ENCODE measurements at regions of chr2 and their contacts with region 1.

Region 1: DNA sequence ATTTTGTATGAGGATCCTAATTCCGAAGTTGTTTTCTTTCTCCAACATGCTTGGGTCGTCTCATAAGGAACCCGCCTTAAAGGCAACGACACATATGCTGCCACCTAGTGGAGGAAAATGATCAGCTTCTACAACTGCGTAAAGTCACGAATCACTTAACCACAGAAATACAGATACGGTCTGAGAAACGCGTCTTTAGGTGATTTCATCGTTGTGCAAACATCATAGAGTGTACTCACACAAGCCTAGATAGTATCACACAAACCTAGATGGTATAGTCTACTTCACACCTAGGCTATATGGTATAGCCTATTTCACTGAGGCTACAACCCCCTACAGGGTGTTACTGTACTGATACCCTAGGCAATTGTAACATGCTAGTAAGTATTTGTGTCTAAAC is 13.1 kb downstream of the GNLY start:
- DNase-seq: peak; percentile 90
- ATAC-seq: peak; percentile 71
- H3K4me3 ChIP-seq: no peak overlapping the region
- H3K4me3 Mint-ChIP-seq: peak overlapping the region; percentile 40
- H3K27ac ChIP-seq: no peak overlapping the region
- H3K27ac Mint-ChIP-seq: peak overlapping the region; percentile 38
- H3K4me1 ChIP-seq: peaks cover 39 to 44% of the 10 kb centered on the region in 2 donors
- H3K4me1 Mint-ChIP-seq: peaks cover 39% of the 10 kb centered on the region
- H3K27me3 ChIP-seq: peaks cover 0 to 9% (median 0%) of the 10 kb centered on the region in 4 experiments
- H3K27me3 Mint-ChIP-seq: peaks cover 16% of the 10 kb centered on the region
- CTCF ChIP-seq: peak; percentile 94

Region 2: DNA sequence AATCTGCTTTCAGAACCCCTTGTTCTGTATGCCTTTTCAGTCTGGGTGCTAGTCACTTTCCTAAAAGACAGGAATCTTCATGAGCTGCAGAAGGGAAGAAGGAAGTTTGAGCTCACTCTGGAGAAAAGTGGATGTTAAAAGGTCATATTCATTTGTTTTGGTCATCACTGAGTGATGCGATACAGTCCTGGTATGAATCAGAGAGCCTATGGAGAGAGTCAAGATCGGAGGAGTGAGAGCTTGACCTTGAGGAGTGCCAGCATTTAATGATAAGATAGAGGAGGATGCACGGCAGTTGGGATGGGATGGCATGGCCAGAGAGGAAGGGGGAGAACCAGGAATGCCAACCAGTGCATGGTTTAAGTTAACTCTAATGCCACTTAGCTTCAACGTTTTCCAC is 71.7 kb before region 1 on chr2:
- CTCF ChIA-PET with region 1: interaction called, 134 read pairs
- POLR2A ChIA-PET with region 1: no interaction called
- intact Hi-C with region 1: no loop called
- DNase-seq: no peak
- ATAC-seq: no peak
- H3K4me3 ChIP-seq: no peak overlapping the region
- H3K4me3 Mint-ChIP-seq: no peak overlapping the region
- H3K27ac ChIP-seq: no peak overlapping the region
- H3K27ac Mint-ChIP-seq: no peak overlapping the region
- H3K4me1 ChIP-seq: no peaks in the 10 kb centered on the region
- H3K4me1 Mint-ChIP-seq: peaks cover 4% of the 10 kb centered on the region
- H3K27me3 ChIP-seq: no peaks in the 10 kb centered on the region
- H3K27me3 Mint-ChIP-seq: no peaks in the 10 kb centered on the region
- CTCF ChIP-seq: no peak

Region 3: GRCh38 chr2:85648619-85649018 is 58.7 kb before region 1 on chr2:
- CTCF ChIA-PET with region 1: interaction called, 13 read pairs
- POLR2A ChIA-PET with region 1: no interaction called
- intact Hi-C with region 1: no loop called
- DNase-seq: peak; percentile 52
- ATAC-seq: peak; percentile 35
- H3K4me3 ChIP-seq: no peak overlapping the region
- H3K4me3 Mint-ChIP-seq: peak overlapping the region; percentile 2
- H3K27ac ChIP-seq: peak overlapping the region in 1 of 2 donors; percentile 1
- H3K27ac Mint-ChIP-seq: no peak overlapping the region
- H3K4me1 ChIP-seq: peaks cover 18 to 26% of the 10 kb centered on the region in 2 donors
- H3K4me1 Mint-ChIP-seq: peaks cover 22% of the 10 kb centered on the region
- H3K27me3 ChIP-seq: no peaks in the 10 kb centered on the region
- H3K27me3 Mint-ChIP-seq: no peaks in the 10 kb centered on the region
- CTCF ChIP-seq: peak; percentile 69

Region 4: GRCh38 chr2:85694052-85695025 is 13.0 kb before region 1 on chr2 and contains the start of gene GNLY:
- CTCF ChIA-PET with region 1: interaction called, 17 read pairs
- POLR2A ChIA-PET with region 1: no interaction called
- intact Hi-C with region 1: no loop called
- DNase-seq: no peak
- ATAC-seq: no peak
- H3K4me3 ChIP-seq: no peak within 1 kb of the TSS
- H3K4me3 Mint-ChIP-seq: no peak within 1 kb of the TSS
- H3K27ac ChIP-seq: no peak within 1 kb of the TSS
- H3K27ac Mint-ChIP-seq: no peak within 1 kb of the TSS
- H3K4me1 ChIP-seq: no peaks in the 10 kb centered on the region
- H3K4me1 Mint-ChIP-seq: peaks cover 4% of the 10 kb centered on the region
- H3K27me3 ChIP-seq: no peaks in the 10 kb centered on the region
- H3K27me3 Mint-ChIP-seq: peaks cover 5% of the 10 kb centered on the region
- CTCF ChIP-seq: no peak
- total RNA-seq, gene GNLY: 4.2 and 4.3 TPM in 2 replicates

Region 5: DNA sequence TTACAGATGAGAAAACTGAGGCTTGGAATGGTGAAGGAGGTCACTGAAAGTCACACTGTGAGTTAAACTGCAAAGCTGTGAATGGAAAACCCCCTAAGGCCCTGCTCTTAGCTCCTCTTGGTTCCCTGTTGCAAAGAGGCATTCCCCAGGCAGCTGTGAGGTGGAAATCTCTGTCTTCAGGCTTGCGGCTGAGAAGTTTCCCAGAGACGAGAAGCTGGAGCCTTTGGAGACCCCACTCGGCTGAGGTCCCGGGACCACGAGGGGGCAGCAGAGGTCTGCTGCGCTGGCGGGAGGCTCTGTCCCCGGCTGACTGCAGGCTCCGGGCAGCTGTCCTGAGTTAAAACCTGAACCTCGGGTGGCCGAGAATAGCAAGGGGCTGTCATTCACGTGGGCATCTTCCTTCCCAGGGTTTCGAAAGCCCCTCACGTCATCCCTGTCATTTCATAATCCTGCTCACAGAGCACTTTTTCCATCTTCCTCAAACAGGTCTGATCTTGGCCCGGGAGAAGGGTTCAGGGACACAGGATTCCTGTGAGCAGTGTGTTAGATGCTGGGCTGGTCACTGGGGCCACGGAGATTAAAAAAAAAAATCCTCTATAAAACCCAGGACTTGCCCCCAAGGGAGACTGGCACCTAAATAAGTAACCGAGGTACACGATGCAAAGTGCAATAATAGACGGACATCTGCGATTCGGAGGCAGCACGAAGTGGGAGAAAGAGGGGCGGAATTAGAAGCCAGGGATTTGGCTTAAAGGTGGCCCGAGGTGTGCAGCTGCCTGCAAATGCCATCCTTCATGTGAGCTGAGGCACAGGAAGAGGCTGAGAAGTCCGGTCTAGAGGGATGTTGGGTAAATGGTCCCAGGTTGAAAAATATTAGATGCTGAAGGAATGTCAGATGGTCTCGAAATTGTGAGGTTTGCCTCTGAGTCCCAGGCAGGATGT is 21.9 kb after region 1 on chr2:
- CTCF ChIA-PET with region 1: interaction called, 15 read pairs
- POLR2A ChIA-PET with region 1: no interaction called
- intact Hi-C with region 1: no loop called
- DNase-seq: peak; percentile 80
- ATAC-seq: peak; percentile 88
- H3K4me3 ChIP-seq: no peak overlapping the region
- H3K4me3 Mint-ChIP-seq: no peak overlapping the region
- H3K27ac ChIP-seq: no peak overlapping the region
- H3K27ac Mint-ChIP-seq: no peak overlapping the region
- H3K4me1 ChIP-seq: peaks cover 3 to 7% of the 10 kb centered on the region in 2 donors
- H3K4me1 Mint-ChIP-seq: no peaks in the 10 kb centered on the region
- H3K27me3 ChIP-seq: peaks cover 0 to 10% (median 3%) of the 10 kb centered on the region in 4 experiments
- H3K27me3 Mint-ChIP-seq: peaks cover 23% of the 10 kb centered on the region
- CTCF ChIP-seq: peak; percentile 96

Region 6: GRCh38 chr2:86221066-86221684 is 513.9 kb after region 1 on chr2:
- CTCF ChIA-PET with region 1: no interaction called
- POLR2A ChIA-PET with region 1: no interaction called
- intact Hi-C with region 1: no loop called
- DNase-seq: peak; percentile 80
- ATAC-seq: peak; percentile 77
- H3K4me3 ChIP-seq: no peak overlapping the region
- H3K4me3 Mint-ChIP-seq: no peak overlapping the region
- H3K27ac ChIP-seq: no peak overlapping the region
- H3K27ac Mint-ChIP-seq: no peak overlapping the region
- H3K4me1 ChIP-seq: peaks cover 16 to 21% of the 10 kb centered on the region in 2 donors
- H3K4me1 Mint-ChIP-seq: peaks cover 27% of the 10 kb centered on the region
- H3K27me3 ChIP-seq: no peaks in the 10 kb centered on the region
- H3K27me3 Mint-ChIP-seq: no peaks in the 10 kb centered on the region
- CTCF ChIP-seq: peak; percentile 98